CD4-positive, alpha-beta T cell (primary cell): ENCODE measurements at regions of chr11 and their contacts with region 1.

Region 1: GRCh38 chr11:128522055-128522942 is 65.1 kb downstream of the ETS1 start:
- DNase-seq: peak; percentile 73 to 95 (median 90)
- ATAC-seq: peak; percentile 47
- H3K4me3 ChIP-seq: peak overlapping the region; percentile 89
- H3K4me3 Mint-ChIP-seq: peak overlapping the region; percentile 93
- H3K27ac ChIP-seq: peak overlapping the region; percentile 83 to 96
- H3K27ac Mint-ChIP-seq: peak overlapping the region; percentile 99
- H3K4me1 ChIP-seq: peaks cover 41% of the 10 kb centered on the region
- H3K4me1 Mint-ChIP-seq: peaks cover 47% of the 10 kb centered on the region
- H3K27me3 ChIP-seq: no peaks in the 10 kb centered on the region
- H3K27me3 Mint-ChIP-seq: no peaks in the 10 kb centered on the region
- CTCF ChIP-seq: no peak

Region 2: DNA sequence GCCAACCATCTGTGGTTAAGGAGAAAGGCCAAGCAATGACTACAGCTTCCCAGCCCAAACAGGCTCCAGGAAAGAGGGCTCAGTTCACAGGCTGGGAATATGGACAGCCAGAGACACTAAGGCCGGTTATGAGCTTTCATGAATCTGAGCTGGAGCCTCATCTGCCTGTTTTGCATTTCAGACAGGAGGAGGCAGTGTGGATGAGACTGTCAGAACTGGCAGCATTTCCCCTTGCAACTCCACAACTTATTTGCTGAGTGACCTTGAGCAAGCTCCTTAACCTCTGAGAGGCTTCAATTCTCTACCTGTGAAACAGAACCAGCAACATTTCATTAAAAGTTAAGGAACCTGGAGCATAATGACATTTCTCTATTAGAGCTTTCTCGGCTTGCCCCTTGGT is 198.9 kb before region 1 on chr11:
- CTCF ChIA-PET with region 1: interaction called, 4 read pairs
- POLR2A ChIA-PET with region 1: interaction called, 11 read pairs
- intact Hi-C with region 1: loop called in 1 of 2 experiments (anchors 1 kb)
- DNase-seq: peak in 6 of 14 experiments; percentile 37 to 83 (median 66)
- ATAC-seq: peak; percentile 10
- H3K4me3 ChIP-seq: no peak overlapping the region
- H3K4me3 Mint-ChIP-seq: peak overlapping the region; percentile 47
- H3K27ac ChIP-seq: peak overlapping the region; percentile 89 to 91
- H3K27ac Mint-ChIP-seq: peak overlapping the region; percentile 93
- H3K4me1 ChIP-seq: peaks cover 85% of the 10 kb centered on the region
- H3K4me1 Mint-ChIP-seq: peaks cover 84% of the 10 kb centered on the region
- H3K27me3 ChIP-seq: no peaks in the 10 kb centered on the region
- H3K27me3 Mint-ChIP-seq: no peaks in the 10 kb centered on the region
- CTCF ChIP-seq: peak; percentile 52

Region 3: GRCh38 chr11:128472128-128473089 is 49.9 kb before region 1 on chr11:
- CTCF ChIA-PET with region 1: interaction called, 6 read pairs
- POLR2A ChIA-PET with region 1: interaction called, 121 read pairs
- intact Hi-C with region 1: loop called in 1 of 2 experiments (anchors 2 kb)
- DNase-seq: peak in 6 of 14 experiments; percentile 41 to 79 (median 64)
- ATAC-seq: peak; percentile 19
- H3K4me3 ChIP-seq: peak overlapping the region; percentile 37
- H3K4me3 Mint-ChIP-seq: peak overlapping the region; percentile 64
- H3K27ac ChIP-seq: peak overlapping the region; percentile 92 to 94
- H3K27ac Mint-ChIP-seq: peak overlapping the region; percentile 99
- H3K4me1 ChIP-seq: peaks cover 90% of the 10 kb centered on the region
- H3K4me1 Mint-ChIP-seq: peaks cover 99% of the 10 kb centered on the region
- H3K27me3 ChIP-seq: no peaks in the 10 kb centered on the region
- H3K27me3 Mint-ChIP-seq: no peaks in the 10 kb centered on the region
- CTCF ChIP-seq: no peak

Region 4: DNA sequence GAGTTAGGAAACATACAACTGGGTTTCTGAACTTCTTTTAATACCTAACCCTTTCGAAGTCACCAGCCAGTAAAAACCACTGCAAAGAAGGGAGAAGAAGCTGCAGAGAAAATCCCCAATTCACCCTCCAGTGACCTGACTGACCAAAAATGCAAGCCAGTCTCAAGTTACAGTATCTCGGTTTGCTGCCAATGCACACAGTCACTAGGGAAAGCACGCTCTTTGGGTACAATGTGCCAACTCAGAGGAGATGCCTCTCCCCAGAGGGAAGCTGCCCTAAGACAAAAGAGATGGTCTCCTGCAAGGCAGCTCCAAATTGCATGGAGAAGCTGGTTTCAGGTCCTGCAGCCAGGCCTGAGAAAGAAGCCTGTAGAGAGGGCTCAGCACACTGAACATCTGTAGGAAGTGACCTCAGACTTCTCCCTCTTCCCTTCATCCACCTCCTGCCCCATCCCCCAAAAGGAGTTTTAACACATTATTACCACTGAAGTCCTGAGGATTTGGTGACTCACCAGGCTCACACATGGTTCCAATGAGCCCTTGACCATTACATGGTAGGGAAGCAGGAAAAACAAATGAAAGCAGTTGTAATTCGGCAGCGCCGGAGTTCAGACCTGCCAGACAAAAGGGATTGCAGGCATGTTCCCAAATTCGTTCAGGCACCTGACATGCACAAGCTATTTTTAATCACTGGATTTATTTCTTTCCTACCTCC is 25.1 kb before region 1 on chr11:
- CTCF ChIA-PET with region 1: no interaction called
- POLR2A ChIA-PET with region 1: interaction called, 611 read pairs
- intact Hi-C with region 1: loop called in 1 of 2 experiments (anchors 2 kb)
- DNase-seq: peak in 3 of 14 experiments; percentile 16 to 65 (median 59)
- ATAC-seq: no peak
- H3K4me3 ChIP-seq: peak overlapping the region; percentile 39
- H3K4me3 Mint-ChIP-seq: peak overlapping the region; percentile 65
- H3K27ac ChIP-seq: peak overlapping the region; percentile 39 to 93
- H3K27ac Mint-ChIP-seq: peak overlapping the region; percentile 99
- H3K4me1 ChIP-seq: peaks cover 75% of the 10 kb centered on the region
- H3K4me1 Mint-ChIP-seq: peaks cover 100% of the 10 kb centered on the region
- H3K27me3 ChIP-seq: no peaks in the 10 kb centered on the region
- H3K27me3 Mint-ChIP-seq: no peaks in the 10 kb centered on the region
- CTCF ChIP-seq: no peak

Region 5: DNA sequence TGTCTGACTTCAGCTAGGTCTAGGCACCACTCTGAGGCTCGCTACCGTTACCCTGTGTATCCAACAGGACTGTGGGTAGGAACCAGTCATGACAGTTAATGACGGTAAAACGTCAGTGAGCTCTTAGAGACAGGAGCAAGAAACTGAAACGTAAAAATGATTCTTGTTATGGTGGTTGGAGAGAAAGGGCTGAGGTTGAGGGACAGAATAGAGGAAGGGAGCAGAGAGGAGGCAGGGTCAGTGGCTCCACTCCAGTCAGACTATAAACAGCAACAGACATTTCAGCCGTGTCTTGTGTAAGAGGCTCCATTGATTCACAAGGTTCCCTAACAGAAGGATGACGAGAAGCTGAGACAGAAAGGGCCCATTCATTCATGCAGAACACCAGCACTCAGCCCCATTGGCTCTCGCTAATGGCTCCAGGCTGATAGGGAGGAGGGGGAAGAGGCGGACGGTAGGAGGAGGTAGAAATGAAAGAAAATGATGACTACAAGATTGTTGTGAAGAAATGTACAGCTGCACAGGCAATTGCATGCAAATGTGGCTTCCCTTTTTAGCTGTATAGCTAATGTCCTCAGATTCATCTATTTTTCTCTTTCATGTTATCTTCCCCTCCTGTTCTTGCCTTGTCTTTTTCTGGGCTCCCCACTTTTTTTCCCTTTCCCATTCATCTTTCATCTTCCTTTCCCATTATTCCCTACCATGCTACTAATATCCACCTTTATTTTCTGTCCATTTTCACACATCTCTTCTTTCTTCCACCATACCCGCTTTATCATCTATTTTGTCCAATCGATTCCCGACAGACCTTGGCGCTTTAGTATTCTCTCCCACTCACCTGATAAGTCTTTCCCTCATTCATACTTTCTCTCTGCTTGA is 30.7 kb after region 1 on chr11:
- CTCF ChIA-PET with region 1: interaction called, 7 read pairs
- POLR2A ChIA-PET with region 1: interaction called, 102 read pairs
- intact Hi-C with region 1: no loop called
- DNase-seq: peak in 4 of 14 experiments; percentile 35 to 72 (median 52)
- ATAC-seq: peak; percentile 20
- H3K4me3 ChIP-seq: peak overlapping the region; percentile 8
- H3K4me3 Mint-ChIP-seq: peak overlapping the region; percentile 54
- H3K27ac ChIP-seq: peak overlapping the region; percentile 5 to 50
- H3K27ac Mint-ChIP-seq: peak overlapping the region; percentile 94
- H3K4me1 ChIP-seq: peaks cover 60% of the 10 kb centered on the region
- H3K4me1 Mint-ChIP-seq: peaks cover 62% of the 10 kb centered on the region
- H3K27me3 ChIP-seq: no peaks in the 10 kb centered on the region
- H3K27me3 Mint-ChIP-seq: no peaks in the 10 kb centered on the region
- CTCF ChIP-seq: no peak

Region 6: GRCh38 chr11:128630367-128631230 is 108.3 kb after region 1 on chr11:
- CTCF ChIA-PET with region 1: interaction called, 9 read pairs
- POLR2A ChIA-PET with region 1: interaction called, 131 read pairs
- intact Hi-C with region 1: loop called (anchors 2 kb)
- DNase-seq: peak; percentile 85 to 98 (median 92)
- ATAC-seq: peak; percentile 79
- H3K4me3 ChIP-seq: no peak overlapping the region
- H3K4me3 Mint-ChIP-seq: peak overlapping the region; percentile 62
- H3K27ac ChIP-seq: peak overlapping the region; percentile 56 to 70
- H3K27ac Mint-ChIP-seq: peak overlapping the region; percentile 97
- H3K4me1 ChIP-seq: peaks cover 65% of the 10 kb centered on the region
- H3K4me1 Mint-ChIP-seq: peaks cover 69% of the 10 kb centered on the region
- H3K27me3 ChIP-seq: no peaks in the 10 kb centered on the region
- H3K27me3 Mint-ChIP-seq: no peaks in the 10 kb centered on the region
- CTCF ChIP-seq: peak; percentile 89